ENCODE measurements at regions of chr2 and their contacts with region 1.

Region 1: DNA sequence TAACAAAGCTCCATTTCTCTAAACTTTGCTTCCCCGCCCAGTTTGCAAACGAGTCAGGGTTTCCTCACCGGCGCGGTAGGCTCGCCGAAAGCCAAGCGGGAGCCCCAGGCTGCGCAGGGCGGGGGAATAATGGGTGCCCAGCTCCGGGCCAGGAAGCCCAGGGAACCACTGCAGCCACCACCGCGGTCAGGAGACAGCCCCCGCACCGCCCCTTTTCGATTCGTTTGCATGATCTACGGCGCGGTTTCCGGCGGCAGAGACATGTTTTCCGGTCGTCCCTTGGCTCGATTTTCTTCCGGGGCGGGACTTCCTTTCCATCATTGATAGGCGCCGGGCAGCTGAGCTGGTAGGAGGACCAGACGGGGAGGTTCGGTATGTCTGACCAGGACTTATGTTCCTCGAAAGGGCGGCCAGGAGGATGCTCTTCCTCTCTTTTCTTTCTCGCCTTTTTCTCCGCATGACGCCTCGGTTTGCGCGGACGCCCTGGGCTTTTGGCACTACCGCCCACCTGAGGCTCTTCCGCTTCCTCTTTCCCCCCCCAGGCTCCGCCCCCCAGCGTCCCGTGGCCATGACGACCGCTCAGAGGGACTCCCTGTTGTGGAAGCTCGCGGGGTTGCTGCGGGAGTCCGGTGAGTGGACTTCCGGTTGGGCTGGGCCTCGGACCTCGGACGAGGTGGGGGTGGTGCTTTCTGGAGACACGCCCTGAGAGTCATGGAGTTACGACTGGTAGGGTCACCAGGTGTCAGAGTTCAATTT is at the start of gene STK11IP:
- DNase-seq: peak; percentile 96
- ATAC-seq: peak; percentile 94
- H3K4me3 ChIP-seq: peak within 1 kb of the TSS; percentile 82
- H3K27ac ChIP-seq: peak within 1 kb of the TSS; percentile 75
- H3K4me1 ChIP-seq: peaks cover 15% of the 10 kb centered on the region
- H3K27me3 ChIP-seq: no peaks in the 10 kb centered on the region
- CTCF ChIP-seq: no peak
- total RNA-seq, gene STK11IP: 17.7 and 26.4 TPM in 2 replicates

Region 2: GRCh38 chr2:219543601-219544358 is 54.0 kb before region 1 on chr2 and contains the starts of genes CHPF and TMEM198:
- CTCF ChIA-PET with region 1: no interaction called
- POLR2A ChIA-PET with region 1: interaction called, 4 read pairs
- intact Hi-C with region 1: loop called (anchors 1 kb)
- DNase-seq: peak; percentile 98
- ATAC-seq: peak; percentile 78
- H3K4me3 ChIP-seq: peak within 1 kb of the TSS; percentile 91
- H3K27ac ChIP-seq: peak within 1 kb of the TSS; percentile 56
- H3K4me1 ChIP-seq: peaks cover 7% of the 10 kb centered on the region; the same call in 1 of the 2 replicates
- H3K27me3 ChIP-seq: no peaks in the 10 kb centered on the region
- CTCF ChIP-seq: no peak
- total RNA-seq, gene CHPF: 139 and 210 TPM in 2 replicates
- total RNA-seq, gene TMEM198: 1.1 and 5.2 TPM in 2 replicates

Region 3: GRCh38 chr2:219571311-219572236 is 26.2 kb before region 1 on chr2 and contains the start of gene OBSL1:
- CTCF ChIA-PET with region 1: no interaction called
- POLR2A ChIA-PET with region 1: interaction called, 7 read pairs
- intact Hi-C with region 1: loop called (anchors 1 kb)
- DNase-seq: peak; percentile 90
- ATAC-seq: peak; percentile 61
- H3K4me3 ChIP-seq: peak within 1 kb of the TSS; percentile 72
- H3K27ac ChIP-seq: peak within 1 kb of the TSS; percentile 68
- H3K4me1 ChIP-seq: peaks cover 28% of the 10 kb centered on the region
- H3K27me3 ChIP-seq: no peaks in the 10 kb centered on the region
- CTCF ChIP-seq: no peak
- total RNA-seq, gene OBSL1: 122 and 148 TPM in 2 replicates

Region 4: GRCh38 chr2:219576493-219577388 is 21.0 kb before region 1 on chr2:
- CTCF ChIA-PET with region 1: no interaction called
- POLR2A ChIA-PET with region 1: no interaction called
- intact Hi-C with region 1: loop called (anchors 1 kb)
- DNase-seq: peak; percentile 75
- ATAC-seq: peak; percentile 82
- H3K4me3 ChIP-seq: peak overlapping the region; percentile 35; the same call in 1 of the 2 replicates
- H3K27ac ChIP-seq: peak overlapping the region; percentile 39
- H3K4me1 ChIP-seq: peaks cover 25% of the 10 kb centered on the region
- H3K27me3 ChIP-seq: no peaks in the 10 kb centered on the region
- CTCF ChIP-seq: no peak

Measured in PC-3 (cell line).